Activated CD8-positive, alpha-beta T cell treated with anti-CD3 and anti-CD28 coated beads, Interleukin-2, amount 10 ng/mL, durations not matched to agents 7 days and 5 days (primary cell): ENCODE measurements at regions of chr5 and their contacts with region 1.

Region 1: GRCh38 chr5:54905943-54906537 is 79.4 kb downstream of the ESM1 start:
- DNase-seq: peak; percentile 86
- ATAC-seq: no peak
- H3K4me3 Mint-ChIP-seq: no peak overlapping the region
- H3K27ac Mint-ChIP-seq: no peak overlapping the region
- H3K4me1 Mint-ChIP-seq: peaks cover 64% of the 10 kb centered on the region
- H3K27me3 Mint-ChIP-seq: peaks cover 24% of the 10 kb centered on the region

Region 2: GRCh38 chr5:54360089-54360488 is 546.0 kb before region 1 on chr5:
- CTCF ChIA-PET with region 1: no interaction called
- POLR2A ChIA-PET with region 1: no interaction called
- DNase-seq: no peak
- ATAC-seq: no peak
- H3K4me3 Mint-ChIP-seq: no peak overlapping the region
- H3K27ac Mint-ChIP-seq: no peak overlapping the region
- H3K4me1 Mint-ChIP-seq: no peaks in the 10 kb centered on the region
- H3K27me3 Mint-ChIP-seq: peaks cover 10% of the 10 kb centered on the region

Region 3: GRCh38 chr5:54663866-54664265 is 242.2 kb before region 1 on chr5:
- CTCF ChIA-PET with region 1: no interaction called
- POLR2A ChIA-PET with region 1: no interaction called
- DNase-seq: no peak
- ATAC-seq: no peak
- H3K4me3 Mint-ChIP-seq: no peak overlapping the region
- H3K27ac Mint-ChIP-seq: no peak overlapping the region
- H3K4me1 Mint-ChIP-seq: peaks cover 15% of the 10 kb centered on the region
- H3K27me3 Mint-ChIP-seq: no peaks in the 10 kb centered on the region

Region 4: DNA sequence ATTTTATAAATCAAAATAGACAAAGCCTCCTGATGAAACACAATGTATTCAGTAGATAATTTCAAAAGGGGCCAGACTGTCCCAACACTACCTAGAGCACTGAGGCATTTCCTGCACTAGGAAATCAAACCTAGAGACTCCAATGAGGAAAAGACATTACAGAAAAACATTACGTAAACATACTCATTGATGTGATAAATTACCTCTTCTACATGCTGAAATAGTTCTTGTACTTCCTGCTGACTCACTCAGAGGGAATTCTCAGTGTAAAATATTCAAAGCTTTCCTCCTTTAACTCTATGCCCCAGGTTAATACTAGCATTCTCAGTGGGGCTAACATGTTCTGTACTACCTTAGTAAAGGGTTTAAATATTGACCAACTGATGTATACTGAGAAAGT is 98.6 kb before region 1 on chr5:
- CTCF ChIA-PET with region 1: no interaction called
- POLR2A ChIA-PET with region 1: no interaction called
- DNase-seq: no peak
- ATAC-seq: no peak
- H3K4me3 Mint-ChIP-seq: no peak overlapping the region
- H3K27ac Mint-ChIP-seq: no peak overlapping the region
- H3K4me1 Mint-ChIP-seq: no peaks in the 10 kb centered on the region
- H3K27me3 Mint-ChIP-seq: no peaks in the 10 kb centered on the region

Region 5: DNA sequence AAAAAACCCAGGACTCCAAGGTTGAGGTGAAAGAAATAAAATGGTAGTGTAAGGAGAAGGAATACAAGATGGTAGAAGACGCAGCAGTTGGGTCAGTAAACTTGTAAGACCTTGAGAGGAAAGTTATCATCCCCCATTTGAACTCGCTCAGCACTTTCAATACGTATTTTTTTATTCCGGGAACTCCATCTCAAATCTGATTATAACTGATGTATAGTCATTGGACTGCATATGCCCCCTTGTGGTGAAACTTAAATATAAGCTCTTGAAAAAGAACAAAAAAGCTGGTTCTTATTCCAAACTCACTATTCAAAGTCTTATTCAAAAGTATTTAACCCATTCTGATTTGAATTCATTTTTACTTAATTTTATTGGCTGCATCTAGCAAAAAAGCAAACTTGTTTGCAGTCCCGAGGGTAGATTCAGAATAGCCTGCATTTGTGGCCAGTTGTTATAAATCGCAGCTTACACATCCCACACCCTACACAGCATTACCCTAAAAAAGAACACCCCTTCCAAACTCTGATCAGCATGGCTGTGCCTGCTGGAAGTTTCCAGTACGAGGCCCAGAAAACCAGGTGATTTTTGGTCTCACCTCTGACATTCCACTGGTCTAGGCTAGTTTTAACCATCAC is 38.6 kb before region 1 on chr5:
- CTCF ChIA-PET with region 1: interaction called, 13 read pairs
- POLR2A ChIA-PET with region 1: no interaction called
- DNase-seq: no peak
- ATAC-seq: peak; percentile 49
- H3K4me3 Mint-ChIP-seq: no peak overlapping the region
- H3K27ac Mint-ChIP-seq: no peak overlapping the region
- H3K4me1 Mint-ChIP-seq: peaks cover 20% of the 10 kb centered on the region
- H3K27me3 Mint-ChIP-seq: peaks cover 41% of the 10 kb centered on the region

Region 6: GRCh38 chr5:54959673-54960418 is 53.8 kb after region 1 on chr5:
- CTCF ChIA-PET with region 1: interaction called, 20 read pairs
- POLR2A ChIA-PET with region 1: no interaction called
- DNase-seq: peak; percentile 46
- ATAC-seq: no peak
- H3K4me3 Mint-ChIP-seq: no peak overlapping the region
- H3K27ac Mint-ChIP-seq: no peak overlapping the region
- H3K4me1 Mint-ChIP-seq: peaks cover 12% of the 10 kb centered on the region
- H3K27me3 Mint-ChIP-seq: peaks cover 13% of the 10 kb centered on the region

Region 7: DNA sequence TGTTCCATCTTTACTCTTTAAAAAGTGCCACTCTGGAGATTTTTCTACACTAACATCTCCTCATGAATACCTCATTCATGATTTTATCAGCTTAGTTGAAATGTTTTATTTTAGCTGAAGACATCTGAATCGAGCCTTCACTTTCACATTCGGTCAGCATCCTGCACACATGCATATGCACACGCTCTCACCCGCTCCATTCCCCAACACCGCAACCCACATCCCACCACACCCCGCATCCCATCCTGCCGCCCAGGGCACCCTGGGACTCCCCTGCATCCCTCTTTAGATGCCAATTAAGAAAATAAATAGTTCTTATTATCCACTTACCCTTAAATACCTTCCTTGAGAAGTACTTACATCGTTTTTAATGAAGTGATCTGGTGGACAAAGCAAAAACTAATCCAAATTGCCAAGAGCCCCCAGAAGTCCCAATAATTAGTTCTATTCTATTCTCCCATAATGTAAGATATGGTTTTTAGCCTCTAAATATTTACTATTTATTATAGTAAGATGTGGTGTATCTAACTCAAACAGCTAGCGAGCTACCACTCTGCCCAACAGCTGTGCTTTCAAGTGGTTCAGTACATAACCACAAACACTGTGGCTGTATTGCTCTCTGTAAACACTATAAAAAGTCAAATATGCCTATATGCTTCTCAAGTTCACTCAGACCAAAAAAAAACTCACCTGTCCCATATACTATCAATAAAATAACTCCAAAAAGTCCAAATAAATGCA is 156.2 kb after region 1 on chr5:
- CTCF ChIA-PET with region 1: interaction called, 10 read pairs
- POLR2A ChIA-PET with region 1: no interaction called
- DNase-seq: peak; percentile 89
- ATAC-seq: peak; percentile 84
- H3K4me3 Mint-ChIP-seq: peak overlapping the region; percentile 64
- H3K27ac Mint-ChIP-seq: peak overlapping the region; percentile 95
- H3K4me1 Mint-ChIP-seq: peaks cover 78% of the 10 kb centered on the region
- H3K27me3 Mint-ChIP-seq: peaks cover 2% of the 10 kb centered on the region

Region 8: GRCh38 chr5:55146543-55147151 is 240.6 kb after region 1 on chr5:
- CTCF ChIA-PET with region 1: interaction called, 72 read pairs
- POLR2A ChIA-PET with region 1: no interaction called
- DNase-seq: peak; percentile 91
- ATAC-seq: peak; percentile 82
- H3K4me3 Mint-ChIP-seq: peak overlapping the region; percentile 34
- H3K27ac Mint-ChIP-seq: peak overlapping the region; percentile 67
- H3K4me1 Mint-ChIP-seq: peaks cover 43% of the 10 kb centered on the region
- H3K27me3 Mint-ChIP-seq: peaks cover 21% of the 10 kb centered on the region

Region 9: DNA sequence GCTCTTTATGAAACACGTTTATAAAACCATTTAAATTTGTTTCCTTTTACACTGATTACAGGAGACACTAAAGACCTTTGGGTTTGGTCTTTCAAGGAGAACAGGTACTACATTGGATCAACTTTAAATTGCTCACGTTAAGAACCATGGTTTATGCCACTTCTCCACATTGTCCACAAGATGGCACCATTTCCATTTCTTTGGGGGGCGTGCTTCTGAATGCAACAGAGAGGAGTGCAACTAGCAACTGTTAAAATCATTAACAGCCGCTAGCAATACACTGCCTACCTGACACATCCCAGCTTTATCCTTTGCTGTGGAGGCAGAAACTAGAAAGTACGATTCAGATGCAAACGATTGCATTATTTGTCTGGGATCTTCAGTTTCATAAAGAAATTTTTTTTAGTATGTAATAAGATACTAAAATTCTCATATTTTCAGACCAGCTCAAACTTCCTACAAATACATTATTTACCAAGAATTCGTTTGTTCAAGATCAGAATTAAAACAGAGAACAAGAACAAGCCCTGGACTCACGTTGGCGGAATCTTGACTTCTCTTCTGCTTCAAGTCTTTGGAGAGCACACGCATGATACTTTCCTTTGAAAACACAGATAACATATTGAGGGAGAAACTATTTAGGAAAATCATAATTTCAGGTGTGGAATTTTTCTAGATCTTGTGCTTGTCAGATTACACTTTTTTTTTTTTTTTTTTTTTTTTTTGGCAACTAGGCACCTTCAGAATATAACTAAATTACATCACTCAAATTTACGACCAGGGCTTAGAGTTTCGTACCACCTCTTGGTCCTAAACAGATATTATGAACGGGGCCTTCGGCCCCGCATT is 266.2 kb after region 1 on chr5:
- CTCF ChIA-PET with region 1: interaction called, 35 read pairs
- POLR2A ChIA-PET with region 1: no interaction called
- DNase-seq: peak; percentile 82
- ATAC-seq: peak; percentile 53
- H3K4me3 Mint-ChIP-seq: peak overlapping the region; percentile 83
- H3K27ac Mint-ChIP-seq: no peak overlapping the region
- H3K4me1 Mint-ChIP-seq: peaks cover 40% of the 10 kb centered on the region
- H3K27me3 Mint-ChIP-seq: peaks cover 57% of the 10 kb centered on the region

Region 10: DNA sequence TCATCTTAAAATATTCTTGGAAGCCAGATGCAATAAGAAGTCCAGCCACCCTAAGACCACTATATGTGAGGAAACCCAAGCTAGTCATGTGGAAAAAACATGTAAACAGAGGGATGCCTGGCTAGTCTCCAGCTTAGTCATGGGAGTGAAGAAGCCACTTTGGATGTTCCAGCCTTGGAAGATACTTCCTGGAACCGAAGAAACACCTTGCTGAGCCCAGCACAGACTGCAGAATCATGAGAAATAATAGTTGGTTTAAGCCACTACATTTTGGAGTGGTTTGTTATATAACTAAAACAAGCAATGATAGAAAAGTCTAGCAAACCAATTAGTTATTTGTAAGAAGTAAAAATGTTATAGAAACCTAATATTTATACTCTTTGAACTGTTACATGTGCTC is 388.9 kb after region 1 on chr5:
- CTCF ChIA-PET with region 1: no interaction called
- POLR2A ChIA-PET with region 1: no interaction called
- DNase-seq: no peak
- ATAC-seq: no peak
- H3K4me3 Mint-ChIP-seq: no peak overlapping the region
- H3K27ac Mint-ChIP-seq: no peak overlapping the region
- H3K4me1 Mint-ChIP-seq: no peaks in the 10 kb centered on the region
- H3K27me3 Mint-ChIP-seq: no peaks in the 10 kb centered on the region